WTC11 (cell line): ENCODE measurements at regions of chr10 and their contacts with region 1.

Region 1: DNA sequence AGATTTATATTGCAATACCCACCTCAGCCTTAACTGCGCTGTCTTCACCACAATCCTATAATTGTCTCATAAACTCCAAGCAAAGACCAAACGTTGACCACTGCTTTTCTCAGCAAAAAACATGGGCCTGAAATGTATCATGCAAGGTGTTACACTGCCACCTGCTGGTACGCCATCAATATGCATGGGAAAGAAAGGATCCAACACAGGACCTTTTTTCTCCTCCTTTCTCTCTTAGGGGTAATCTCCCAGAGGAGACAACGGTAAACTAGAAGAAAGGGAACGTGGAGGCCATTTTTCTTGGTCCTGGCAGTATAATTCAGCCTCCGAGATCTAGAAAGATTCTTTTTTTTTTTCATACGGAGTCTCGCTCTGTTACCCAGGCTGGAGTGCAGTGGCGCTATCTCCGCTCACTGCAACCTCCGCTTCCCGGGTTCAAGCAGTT is 79.1 kb upstream of the MPP7 start:
- DNase-seq: peak; percentile 88
- ATAC-seq: peak; percentile 95
- H3K4me3 Mint-ChIP-seq: peak overlapping the region; percentile 15; the same call in 1 of the 2 replicates
- H3K27ac Mint-ChIP-seq: no peak overlapping the region
- H3K4me1 Mint-ChIP-seq: no peaks in the 10 kb centered on the region
- H3K27me3 Mint-ChIP-seq: no peaks in the 10 kb centered on the region
- CTCF ChIP-seq: peak; percentile 87

Region 2: GRCh38 chr10:28393966-28394568 is 12.1 kb after region 1 on chr10:
- CTCF ChIA-PET with region 1: interaction called, 21 read pairs
- POLR2A ChIA-PET with region 1: no interaction called
- DNase-seq: peak; percentile 76
- ATAC-seq: peak; percentile 98
- H3K4me3 Mint-ChIP-seq: no peak overlapping the region
- H3K27ac Mint-ChIP-seq: no peak overlapping the region
- H3K4me1 Mint-ChIP-seq: peaks cover 2% of the 10 kb centered on the region; the same call in 1 of the 2 replicates
- H3K27me3 Mint-ChIP-seq: no peaks in the 10 kb centered on the region
- CTCF ChIP-seq: peak; percentile 90